ENCODE measurements at regions of chr9 and their contacts with region 1.

Region 1: GRCh38 chr9:35116898-35117551 is 1.4 kb upstream of the ATOSB start:
- DNase-seq: peak; percentile 83 to 93 (median 89)
- H3K4me3 ChIP-seq: peak overlapping the region; percentile 44
- H3K27ac ChIP-seq: peak overlapping the region in 1 of 2 donors; percentile 82
- H3K4me1 ChIP-seq: peaks cover 11% of the 10 kb centered on the region
- H3K27me3 ChIP-seq: no peaks in the 10 kb centered on the region
- CTCF ChIP-seq: peak; percentile 81 to 94 (median 83)
- EP300 ChIP-seq: no peak
- POLR2A ChIP-seq: no peak

Region 2: GRCh38 chr9:35158501-35159280 is 41.7 kb after region 1 on chr9:
- intact Hi-C with region 1: no loop called
- DNase-seq: no peak
- H3K4me3 ChIP-seq: no peak overlapping the region
- H3K27ac ChIP-seq: no peak overlapping the region
- H3K4me1 ChIP-seq: peaks cover 5% of the 10 kb centered on the region
- H3K27me3 ChIP-seq: no peaks in the 10 kb centered on the region
- CTCF ChIP-seq: no peak
- EP300 ChIP-seq: no peak
- POLR2A ChIP-seq: no peak

Region 3: DNA sequence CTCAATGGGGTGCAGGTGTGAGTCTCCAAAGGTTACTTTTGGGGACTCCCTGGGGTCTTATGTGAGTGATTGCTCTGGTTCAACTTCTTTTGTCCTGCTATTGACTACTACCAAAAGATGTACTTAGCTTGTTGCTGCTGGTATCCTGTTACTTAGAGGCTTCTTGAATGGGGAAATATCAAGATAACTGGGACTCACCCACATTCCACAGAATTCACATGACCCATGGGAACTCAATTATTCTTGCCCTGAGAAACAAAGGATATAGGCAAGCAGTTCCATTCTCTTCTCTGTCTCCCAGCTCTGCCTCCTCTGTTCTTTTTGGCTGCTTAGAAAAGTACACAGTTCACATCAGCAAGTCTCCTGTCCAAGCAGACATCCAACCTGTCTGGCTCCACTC is 150.7 kb after region 1 on chr9:
- intact Hi-C with region 1: loop called in 1 of 4 experiments (anchors 10 kb)
- DNase-seq: no peak
- H3K4me3 ChIP-seq: no peak overlapping the region
- H3K27ac ChIP-seq: no peak overlapping the region
- H3K4me1 ChIP-seq: no peaks in the 10 kb centered on the region
- H3K27me3 ChIP-seq: no peaks in the 10 kb centered on the region
- CTCF ChIP-seq: no peak
- EP300 ChIP-seq: no peak
- POLR2A ChIP-seq: no peak

Region 4: GRCh38 chr9:35476596-35476995 is 359.6 kb after region 1 on chr9:
- intact Hi-C with region 1: loop called (anchors 2 to 10 kb)
- DNase-seq: no peak
- H3K4me3 ChIP-seq: no peak overlapping the region
- H3K27ac ChIP-seq: no peak overlapping the region
- H3K4me1 ChIP-seq: no peaks in the 10 kb centered on the region
- H3K27me3 ChIP-seq: no peaks in the 10 kb centered on the region
- CTCF ChIP-seq: no peak
- EP300 ChIP-seq: no peak
- POLR2A ChIP-seq: no peak

Region 5: GRCh38 chr9:35540315-35540714 is 423.3 kb after region 1 on chr9:
- intact Hi-C with region 1: loop called in 1 of 4 experiments (anchors 5 kb)
- DNase-seq: no peak
- H3K4me3 ChIP-seq: no peak overlapping the region
- H3K27ac ChIP-seq: no peak overlapping the region
- H3K4me1 ChIP-seq: peaks cover 19% of the 10 kb centered on the region
- H3K27me3 ChIP-seq: no peaks in the 10 kb centered on the region
- CTCF ChIP-seq: no peak
- EP300 ChIP-seq: no peak
- POLR2A ChIP-seq: no peak

Measured in ovary (tissue), 10 donors.